PC-3 (cell line): ENCODE measurements at regions of chr5 and their contacts with region 1.

Region 1: DNA sequence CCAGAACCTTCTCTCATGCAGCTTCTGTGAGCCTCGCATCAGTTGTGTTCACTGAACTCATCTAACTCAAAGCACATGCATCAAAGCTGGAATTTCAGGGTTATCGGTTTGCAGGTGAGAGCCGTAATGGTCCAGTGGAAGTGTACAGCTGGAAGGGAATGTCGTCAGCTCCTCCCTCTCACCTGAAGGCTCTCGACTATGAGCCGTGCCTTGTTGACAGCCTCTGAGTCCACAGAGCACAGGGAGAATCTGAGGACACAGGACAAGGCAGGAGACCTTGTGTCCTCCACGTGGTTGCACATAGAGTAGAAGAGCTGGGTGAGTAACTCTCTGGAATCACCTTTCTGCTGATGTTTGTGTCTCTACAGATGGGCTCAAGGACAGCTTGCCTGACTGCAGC is 38.8 kb downstream of the PROP1 start:
- DNase-seq: no peak
- ATAC-seq: no peak
- H3K4me3 ChIP-seq: no peak overlapping the region
- H3K27ac ChIP-seq: no peak overlapping the region
- H3K4me1 ChIP-seq: no peaks in the 10 kb centered on the region
- H3K27me3 ChIP-seq: no peaks in the 10 kb centered on the region
- CTCF ChIP-seq: no peak

Region 2: GRCh38 chr5:179516221-179516620 is 1559.0 kb after region 1 on chr5:
- CTCF ChIA-PET with region 1: interaction called, 11 read pairs
- POLR2A ChIA-PET with region 1: no interaction called
- intact Hi-C with region 1: no loop called
- DNase-seq: no peak
- ATAC-seq: no peak
- H3K4me3 ChIP-seq: no peak overlapping the region
- H3K27ac ChIP-seq: no peak overlapping the region
- H3K4me1 ChIP-seq: no peaks in the 10 kb centered on the region
- H3K27me3 ChIP-seq: peaks cover 3% of the 10 kb centered on the region; the same call in 1 of the 2 replicates
- CTCF ChIP-seq: no peak